IMR-90 (cell line): ENCODE measurements at regions of chr6 and their contacts with region 1.

Region 1: GRCh38 chr6:117653949-117654348 is 21.3 kb upstream of the NUS1 start:
- DNase-seq: no peak
- ATAC-seq: no peak
- H3K4me3 ChIP-seq: no peak overlapping the region
- H3K27ac ChIP-seq: no peak overlapping the region
- H3K4me1 ChIP-seq: no peaks in the 10 kb centered on the region
- H3K27me3 ChIP-seq: no peaks in the 10 kb centered on the region
- CTCF ChIP-seq: no peak
- POLR2A ChIP-seq: no peak
- RAD21 ChIP-seq: no peak

Region 2: GRCh38 chr6:116066789-116067188 is 1587.2 kb before region 1 on chr6:
- CTCF ChIA-PET with region 1: no interaction called
- POLR2A ChIA-PET with region 1: no interaction called
- dilution Hi-C with region 1: no loop called
- in situ Hi-C with region 1: no loop called
- intact Hi-C with region 1: loop called (anchors 5 kb)
- DNase-seq: no peak
- ATAC-seq: no peak
- H3K4me3 ChIP-seq: no peak overlapping the region
- H3K27ac ChIP-seq: no peak overlapping the region
- H3K4me1 ChIP-seq: peaks cover 2% of the 10 kb centered on the region; the same call in 1 of the 2 replicates
- H3K27me3 ChIP-seq: no peaks in the 10 kb centered on the region
- CTCF ChIP-seq: no peak
- POLR2A ChIP-seq: no peak
- RAD21 ChIP-seq: no peak